ENCODE measurements at regions of chr9 and their contacts with region 1.

Region 1: DNA sequence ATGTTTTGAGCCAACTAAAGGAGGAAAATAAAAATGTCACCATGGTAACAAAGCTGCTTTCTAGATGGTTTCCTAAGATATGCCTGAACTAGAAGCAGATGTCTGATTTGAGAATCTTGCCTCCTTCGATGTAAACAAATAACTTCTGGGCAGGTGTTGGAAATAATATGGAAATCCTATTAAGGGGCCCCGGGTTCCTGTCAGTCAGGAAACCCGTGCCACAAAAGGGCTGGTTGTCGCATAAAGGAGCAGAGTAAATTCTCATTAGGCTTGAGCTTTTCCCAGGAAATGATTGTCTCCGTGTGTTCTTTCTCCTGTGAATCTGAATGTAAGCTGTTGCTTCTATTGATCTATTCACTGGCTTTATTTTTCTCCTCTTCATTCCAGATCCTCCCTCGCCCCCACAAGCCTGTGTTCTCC is 90.8 kb downstream of the TLE4 start:
- DNase-seq: peak; percentile 90
- H3K4me3 ChIP-seq: no peak overlapping the region
- H3K27ac ChIP-seq: peak overlapping the region; percentile 39
- H3K4me1 ChIP-seq: peaks cover 11% of the 10 kb centered on the region
- H3K27me3 ChIP-seq: no peaks in the 10 kb centered on the region
- CTCF ChIP-seq: no peak
- POLR2A ChIP-seq: no peak

Region 2: DNA sequence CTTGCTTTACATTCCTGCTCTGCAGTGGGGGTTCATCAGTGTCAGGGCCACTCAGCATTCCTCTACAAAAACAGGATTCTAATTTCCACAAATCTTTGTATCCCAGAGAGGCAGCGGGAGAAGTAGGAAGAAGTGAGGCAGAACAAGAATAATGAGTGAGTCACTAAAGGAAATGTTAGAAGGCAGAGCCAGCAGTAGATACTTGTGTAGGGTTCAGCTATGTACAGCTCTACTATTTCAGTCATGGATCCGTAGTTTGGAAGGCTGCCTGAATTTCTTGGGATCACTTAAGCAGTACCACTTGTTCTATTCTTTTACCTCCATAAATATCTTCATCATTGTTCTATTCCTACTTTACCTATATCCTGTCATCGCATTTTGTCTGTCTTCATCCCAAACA is 337.0 kb before region 1 on chr9:
- CTCF ChIA-PET with region 1: no interaction called
- POLR2A ChIA-PET with region 1: no interaction called
- dilution Hi-C with region 1: no loop called
- intact Hi-C with region 1: no loop called
- DNase-seq: peak; percentile 8
- H3K4me3 ChIP-seq: no peak overlapping the region
- H3K27ac ChIP-seq: no peak overlapping the region
- H3K4me1 ChIP-seq: no peaks in the 10 kb centered on the region
- H3K27me3 ChIP-seq: no peaks in the 10 kb centered on the region
- CTCF ChIP-seq: no peak
- POLR2A ChIP-seq: no peak

Region 3: DNA sequence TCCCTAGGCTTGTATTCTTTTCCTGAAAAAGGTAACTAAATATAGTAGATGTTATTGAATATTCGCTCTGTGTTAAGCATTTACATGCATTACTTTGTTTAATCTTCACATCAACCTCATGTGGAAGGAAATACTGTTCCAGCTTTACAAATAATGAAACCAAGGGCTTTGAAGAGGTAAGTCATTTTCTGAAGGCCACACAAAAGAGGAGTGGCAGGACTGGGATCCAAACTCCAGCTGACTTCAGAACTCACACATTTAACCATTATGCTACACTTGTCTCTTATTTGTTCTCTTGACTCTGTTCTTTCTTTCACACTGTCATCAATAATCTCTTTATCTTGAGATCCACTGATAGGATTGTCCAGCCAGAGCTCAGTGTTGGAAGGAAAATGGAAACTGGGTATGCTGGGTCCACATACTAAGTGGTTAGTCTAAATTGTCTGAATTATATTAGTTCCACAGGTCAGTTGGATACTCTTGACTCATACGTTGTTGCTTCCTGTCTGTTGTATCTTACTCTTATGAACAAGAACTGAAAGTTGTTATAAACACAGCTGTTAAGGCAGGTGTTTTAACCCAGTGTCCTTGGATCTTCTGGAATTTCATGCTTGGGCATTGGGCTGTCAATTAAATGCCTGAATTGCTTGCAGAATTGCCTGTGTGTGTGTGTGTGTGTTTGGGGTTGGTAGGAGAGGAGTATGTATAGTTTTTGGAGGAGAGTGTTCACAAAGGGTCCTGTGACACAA is 25.2 kb before region 1 on chr9:
- CTCF ChIA-PET with region 1: interaction called, 3 read pairs
- POLR2A ChIA-PET with region 1: no interaction called
- dilution Hi-C with region 1: no loop called
- intact Hi-C with region 1: loop called (anchors 2 kb)
- DNase-seq: peak; percentile 56
- H3K4me3 ChIP-seq: no peak overlapping the region
- H3K27ac ChIP-seq: no peak overlapping the region
- H3K4me1 ChIP-seq: peaks cover 7% of the 10 kb centered on the region
- H3K27me3 ChIP-seq: no peaks in the 10 kb centered on the region
- CTCF ChIP-seq: no peak
- POLR2A ChIP-seq: no peak

Region 4: DNA sequence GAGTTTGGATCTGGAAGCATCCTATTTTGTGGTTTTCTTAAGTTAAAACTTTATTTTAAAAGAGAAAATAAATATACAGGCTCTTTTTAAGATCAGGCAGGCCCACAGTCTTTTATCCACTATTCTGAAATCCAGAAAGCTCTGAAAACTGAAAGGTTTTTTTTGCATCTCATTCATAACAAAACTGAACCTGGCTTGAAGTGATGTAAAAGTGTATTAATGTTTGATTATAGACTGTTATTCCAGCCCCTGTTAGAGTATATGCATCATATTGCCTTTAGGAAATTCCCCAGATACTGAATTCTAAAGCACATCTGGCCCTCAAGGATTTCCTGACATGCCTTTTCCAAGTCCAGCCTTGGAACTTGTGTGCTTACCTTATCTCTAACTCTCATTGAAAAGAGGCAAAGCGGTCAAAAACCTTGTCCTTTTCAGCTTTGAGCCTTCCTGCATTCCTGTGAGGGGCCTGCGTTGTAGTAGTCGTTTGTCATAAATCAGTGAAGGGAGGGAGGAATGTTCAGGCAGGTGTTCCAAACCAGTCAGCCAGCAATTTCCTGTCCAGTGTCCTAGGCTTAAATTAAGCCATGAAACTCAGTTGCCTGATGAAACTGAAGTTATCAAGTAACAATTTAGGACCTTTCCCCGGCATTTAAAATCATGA is 19.7 kb after region 1 on chr9:
- CTCF ChIA-PET with region 1: no interaction called
- POLR2A ChIA-PET with region 1: no interaction called
- dilution Hi-C with region 1: no loop called
- intact Hi-C with region 1: loop called (anchors 1 kb)
- DNase-seq: peak; percentile 79
- H3K4me3 ChIP-seq: no peak overlapping the region
- H3K27ac ChIP-seq: peak overlapping the region; percentile 45
- H3K4me1 ChIP-seq: peaks cover 14% of the 10 kb centered on the region
- H3K27me3 ChIP-seq: no peaks in the 10 kb centered on the region
- CTCF ChIP-seq: no peak
- POLR2A ChIP-seq: no peak

Region 5: DNA sequence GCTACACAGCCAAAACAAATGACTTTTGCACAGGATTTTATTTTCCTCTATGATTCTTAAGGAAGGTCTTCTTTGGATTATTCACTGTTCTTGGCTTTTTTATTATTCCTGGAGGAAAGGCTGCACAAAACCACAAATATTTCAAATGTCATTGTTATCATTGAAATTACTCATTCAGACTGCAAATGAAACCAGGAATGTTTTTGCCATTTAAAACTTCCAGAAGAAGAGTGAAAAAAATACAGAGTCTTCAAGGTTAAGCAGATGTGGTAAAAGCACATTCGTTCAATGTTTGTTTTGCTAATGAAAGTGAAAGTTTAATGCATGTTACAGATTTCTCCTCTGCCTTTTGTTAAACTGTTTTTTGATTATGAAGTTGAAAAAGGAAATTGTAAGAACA is 147.4 kb after region 1 on chr9:
- CTCF ChIA-PET with region 1: no interaction called
- POLR2A ChIA-PET with region 1: no interaction called
- dilution Hi-C with region 1: no loop called
- intact Hi-C with region 1: loop called (anchors 10 kb)
- DNase-seq: peak; percentile 72
- H3K4me3 ChIP-seq: peak overlapping the region in 1 of 3 experiments; percentile 44
- H3K27ac ChIP-seq: peak overlapping the region; percentile 31
- H3K4me1 ChIP-seq: peaks cover 23% of the 10 kb centered on the region
- H3K27me3 ChIP-seq: no peaks in the 10 kb centered on the region
- CTCF ChIP-seq: no peak
- POLR2A ChIP-seq: no peak

Region 6: DNA sequence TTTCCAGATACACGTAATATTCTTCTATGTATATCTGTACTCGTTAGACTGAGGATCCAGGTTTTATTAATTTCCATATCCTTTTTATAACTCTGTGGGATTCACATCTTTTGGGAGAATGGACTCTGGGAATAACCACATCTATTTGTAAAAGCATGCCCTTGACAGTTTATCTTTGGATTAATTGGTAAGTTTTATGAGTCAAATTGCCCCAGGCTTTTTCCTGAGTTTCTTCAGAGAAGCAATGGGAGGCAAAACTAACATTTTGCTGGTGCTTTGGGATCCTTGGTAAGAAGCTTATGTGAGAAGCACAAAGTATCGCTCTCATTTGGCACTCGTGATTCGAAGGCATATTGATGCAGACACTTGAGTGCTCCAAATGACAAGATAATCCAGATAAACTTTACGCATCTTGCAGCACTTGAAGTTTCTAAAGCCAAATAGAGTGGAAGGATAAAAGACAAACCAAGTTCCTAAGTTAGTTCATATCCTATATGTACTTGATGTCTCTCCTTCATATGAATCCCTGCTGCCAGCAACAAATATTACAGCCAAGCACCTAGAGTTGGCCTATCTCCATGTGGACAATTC is 233.9 kb after region 1 on chr9:
- CTCF ChIA-PET with region 1: no interaction called
- POLR2A ChIA-PET with region 1: no interaction called
- dilution Hi-C with region 1: no loop called
- intact Hi-C with region 1: no loop called
- DNase-seq: no peak
- H3K4me3 ChIP-seq: no peak overlapping the region
- H3K27ac ChIP-seq: no peak overlapping the region
- H3K4me1 ChIP-seq: no peaks in the 10 kb centered on the region
- H3K27me3 ChIP-seq: no peaks in the 10 kb centered on the region
- CTCF ChIP-seq: no peak
- POLR2A ChIP-seq: no peak